ENCODE measurements at regions of chr6 and their contacts with region 1.

Region 1: GRCh38 chr6:21593412-21593926 is at the start of gene SOX4:
- DNase-seq: peak; percentile 62
- ATAC-seq: peak; percentile 82
- H3K4me3 Mint-ChIP-seq: no peak within 1 kb of the TSS
- H3K27ac Mint-ChIP-seq: peak within 1 kb of the TSS; percentile 84
- H3K4me1 Mint-ChIP-seq: peaks cover 25% of the 10 kb centered on the region
- H3K27me3 Mint-ChIP-seq: peaks cover 3% of the 10 kb centered on the region
- CTCF ChIP-seq: no peak
- total RNA-seq, gene SOX4: 3.4 and 3.5 TPM in 2 replicates

Region 2: DNA sequence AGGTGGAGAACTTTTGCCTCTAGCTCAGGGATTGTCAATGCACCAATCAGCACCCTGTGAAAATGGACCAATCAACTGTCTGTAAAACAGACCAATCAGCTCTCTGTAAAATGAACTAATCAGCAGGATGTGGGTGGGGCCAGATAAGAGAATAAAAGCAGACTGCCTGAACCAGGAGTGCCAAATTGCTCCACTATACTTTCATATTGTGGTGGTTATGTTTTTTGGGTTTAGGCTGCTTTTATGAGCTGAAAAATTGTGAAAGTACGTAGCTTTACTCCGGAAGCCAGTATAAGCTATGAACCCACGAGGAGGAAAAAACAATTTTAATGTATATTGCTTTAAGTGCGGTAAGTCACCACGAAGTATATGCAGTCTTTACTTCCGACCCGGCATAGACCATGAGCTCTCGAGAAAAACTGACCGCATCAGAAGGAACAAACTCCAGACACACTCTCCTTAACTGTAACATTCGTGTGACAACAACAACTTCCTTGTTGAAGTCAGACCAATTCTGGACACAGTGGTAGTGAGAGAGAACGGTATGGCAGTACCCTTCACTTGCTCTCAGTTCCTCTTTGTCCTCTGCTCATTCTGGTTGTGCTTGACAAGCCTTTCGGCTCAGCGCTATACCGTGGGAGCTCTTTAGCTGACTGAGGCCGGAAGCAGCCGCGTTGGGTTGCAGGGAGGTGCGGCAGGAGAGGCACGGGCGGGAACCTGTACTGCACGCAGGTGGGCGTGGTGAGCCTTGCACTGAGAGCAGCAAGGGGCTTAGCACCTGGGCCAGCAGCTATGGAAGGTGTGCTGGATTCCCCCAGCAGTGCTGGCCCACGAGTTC is 1273.7 kb before region 1 on chr6:
- CTCF ChIA-PET with region 1: no interaction called
- POLR2A ChIA-PET with region 1: interaction called, 5 read pairs
- intact Hi-C with region 1: loop called (anchors 2 kb)
- DNase-seq: peak; percentile 71
- ATAC-seq: peak; percentile 96
- H3K4me3 Mint-ChIP-seq: peak overlapping the region; percentile 81
- H3K27ac Mint-ChIP-seq: peak overlapping the region; percentile 96
- H3K4me1 Mint-ChIP-seq: peaks cover 15% of the 10 kb centered on the region
- H3K27me3 Mint-ChIP-seq: no peaks in the 10 kb centered on the region
- CTCF ChIP-seq: no peak

Region 3: DNA sequence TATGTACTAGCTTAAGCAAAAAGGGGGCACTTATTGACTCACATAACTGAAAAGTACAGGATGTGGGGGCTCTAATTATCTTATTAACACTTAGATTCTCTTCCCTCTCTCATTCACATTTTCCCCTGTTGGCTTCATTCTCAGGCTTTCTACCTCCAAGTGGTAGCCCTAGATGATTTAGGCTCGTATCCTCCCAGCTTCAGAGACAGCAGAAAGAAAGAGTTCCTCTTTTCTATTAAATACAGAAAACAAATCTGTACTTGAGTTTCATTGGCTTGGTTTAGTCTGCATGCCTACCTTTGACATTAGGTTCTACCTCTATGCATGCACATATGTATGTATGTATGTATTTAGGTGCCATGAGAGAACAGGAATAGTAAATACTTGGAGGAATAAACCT is 1207.3 kb before region 1 on chr6:
- CTCF ChIA-PET with region 1: no interaction called
- POLR2A ChIA-PET with region 1: no interaction called
- intact Hi-C with region 1: no loop called
- DNase-seq: no peak
- ATAC-seq: no peak
- H3K4me3 Mint-ChIP-seq: no peak overlapping the region
- H3K27ac Mint-ChIP-seq: no peak overlapping the region
- H3K4me1 Mint-ChIP-seq: no peaks in the 10 kb centered on the region
- H3K27me3 Mint-ChIP-seq: peaks cover 10% of the 10 kb centered on the region
- CTCF ChIP-seq: no peak

Region 4: DNA sequence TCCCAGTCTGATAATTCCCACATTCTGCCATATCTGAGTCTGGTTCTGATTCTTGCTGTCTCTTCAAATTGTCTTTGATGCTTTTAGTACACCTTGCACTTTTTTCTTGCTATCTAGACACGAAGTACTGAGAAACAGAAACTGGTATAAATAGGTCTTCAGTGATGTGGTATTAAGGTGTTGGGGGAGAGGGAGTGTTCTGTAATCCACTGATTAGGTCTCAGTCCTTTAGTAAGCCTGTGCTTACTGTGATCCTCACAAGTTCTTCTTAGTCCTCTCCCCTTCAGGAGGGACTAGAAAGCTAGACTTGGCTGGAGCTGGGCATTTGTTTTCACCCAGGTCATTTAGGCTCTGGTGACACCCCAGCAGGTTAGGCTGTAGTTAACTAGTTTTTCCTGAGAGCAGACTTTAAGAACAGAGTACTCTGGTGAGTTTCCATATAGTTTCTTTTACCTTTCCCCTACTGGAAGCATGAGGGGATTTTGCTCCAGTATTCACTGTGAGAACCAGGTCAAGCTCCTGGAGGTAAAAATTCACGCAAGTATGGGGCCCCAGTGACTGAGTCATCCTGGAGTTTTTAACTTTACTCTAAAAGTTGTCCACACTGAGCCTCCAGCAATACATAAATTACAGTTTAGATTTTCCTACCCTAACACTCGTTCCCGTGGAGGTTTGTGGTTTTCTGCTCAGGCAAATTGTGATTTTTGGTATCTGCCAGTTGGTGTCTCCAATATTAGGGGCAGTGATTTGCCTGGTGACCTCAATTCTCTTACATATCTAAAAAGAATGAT is 904.6 kb before region 1 on chr6:
- CTCF ChIA-PET with region 1: no interaction called
- POLR2A ChIA-PET with region 1: no interaction called
- intact Hi-C with region 1: loop called (anchors 10 kb)
- DNase-seq: no peak
- ATAC-seq: no peak
- H3K4me3 Mint-ChIP-seq: no peak overlapping the region
- H3K27ac Mint-ChIP-seq: no peak overlapping the region
- H3K4me1 Mint-ChIP-seq: peaks cover 30% of the 10 kb centered on the region
- H3K27me3 Mint-ChIP-seq: no peaks in the 10 kb centered on the region
- CTCF ChIP-seq: no peak

Region 5: DNA sequence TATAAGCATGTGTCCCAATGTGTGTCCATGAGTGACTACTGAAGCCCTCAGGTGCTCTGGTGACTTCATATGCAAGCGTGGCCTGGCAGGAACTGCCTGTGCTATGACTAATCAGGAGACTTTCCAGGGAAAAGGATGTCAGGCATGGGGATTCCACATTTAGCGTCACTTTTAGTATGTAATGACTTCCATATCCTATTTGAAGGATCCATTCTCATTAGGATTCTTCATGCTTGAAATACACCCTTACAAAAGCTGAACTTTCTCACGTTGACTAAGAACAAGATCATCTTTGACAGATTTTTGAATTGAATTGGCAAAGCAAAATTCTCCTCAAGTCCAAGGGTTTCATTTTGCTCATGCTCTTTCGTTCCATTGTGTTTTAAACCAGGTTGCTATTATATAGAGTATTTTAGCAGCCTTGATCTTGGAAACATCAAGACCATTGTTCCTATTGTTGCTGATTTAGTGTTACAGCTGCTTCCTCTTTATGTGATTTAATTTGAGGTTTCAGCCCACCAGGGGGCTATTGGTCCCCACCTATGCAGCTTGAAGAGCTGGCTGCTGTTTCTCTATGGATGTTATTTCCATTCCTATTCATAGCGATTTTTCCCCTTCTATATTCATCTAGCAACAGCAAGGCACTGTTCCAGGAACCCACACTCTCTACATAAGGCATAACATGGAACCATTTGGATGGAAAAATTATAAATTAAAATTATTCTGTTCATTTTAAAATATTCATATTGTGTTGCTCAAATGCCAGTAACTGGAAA is 640.6 kb before region 1 on chr6:
- CTCF ChIA-PET with region 1: interaction called, 3 read pairs
- POLR2A ChIA-PET with region 1: no interaction called
- intact Hi-C with region 1: loop called (anchors 5 kb)
- DNase-seq: no peak
- ATAC-seq: no peak
- H3K4me3 Mint-ChIP-seq: no peak overlapping the region
- H3K27ac Mint-ChIP-seq: no peak overlapping the region
- H3K4me1 Mint-ChIP-seq: no peaks in the 10 kb centered on the region
- H3K27me3 Mint-ChIP-seq: no peaks in the 10 kb centered on the region
- CTCF ChIP-seq: no peak

Region 6: GRCh38 chr6:21188505-21189223 is 404.8 kb before region 1 on chr6:
- CTCF ChIA-PET with region 1: no interaction called
- POLR2A ChIA-PET with region 1: no interaction called
- intact Hi-C with region 1: loop called (anchors 5 kb)
- DNase-seq: no peak
- ATAC-seq: peak; percentile 40
- H3K4me3 Mint-ChIP-seq: peak overlapping the region; percentile 7
- H3K27ac Mint-ChIP-seq: peak overlapping the region; percentile 71
- H3K4me1 Mint-ChIP-seq: peaks cover 35% of the 10 kb centered on the region
- H3K27me3 Mint-ChIP-seq: no peaks in the 10 kb centered on the region
- CTCF ChIP-seq: no peak

Region 7: DNA sequence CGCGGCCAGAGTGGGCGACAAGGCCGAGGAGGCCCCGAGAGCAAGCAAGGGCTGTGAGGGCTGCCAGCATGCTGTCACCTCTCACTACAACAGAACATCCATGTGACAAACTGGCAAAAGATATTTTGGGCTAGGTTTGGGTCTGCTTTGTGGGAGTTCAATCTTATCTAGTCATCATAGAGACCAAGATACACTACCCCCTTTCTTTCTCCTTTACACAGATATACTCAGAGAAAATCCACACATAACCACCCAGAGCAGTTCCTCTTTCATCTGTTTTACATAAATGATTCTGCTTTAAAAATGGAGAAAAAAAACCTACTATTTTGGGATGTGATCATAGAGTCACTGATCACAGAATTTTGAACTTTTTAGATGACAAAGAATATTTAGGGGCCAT is 16.9 kb after region 1 on chr6:
- CTCF ChIA-PET with region 1: interaction called, 3 read pairs
- POLR2A ChIA-PET with region 1: interaction called, 3 read pairs
- intact Hi-C with region 1: loop called (anchors 1 kb)
- DNase-seq: no peak
- ATAC-seq: peak; percentile 78
- H3K4me3 Mint-ChIP-seq: no peak overlapping the region
- H3K27ac Mint-ChIP-seq: peak overlapping the region; percentile 63
- H3K4me1 Mint-ChIP-seq: peaks cover 15% of the 10 kb centered on the region
- H3K27me3 Mint-ChIP-seq: peaks cover 2% of the 10 kb centered on the region
- CTCF ChIP-seq: no peak